Activated T-helper 2 cell treated with anti-CD3 and anti-CD28 coated beads, Interferon-gamma antibody, Interleukin-2, Interleukin-4, amounts not matched to agents 10 μg/mL and 5 μg/mL and 100 μg/mL, durations not matched to agents 14 hours and 24 hours and 36 hours (primary cell): ENCODE measurements at regions of chr9 and their contacts with region 1.

Region 1: DNA sequence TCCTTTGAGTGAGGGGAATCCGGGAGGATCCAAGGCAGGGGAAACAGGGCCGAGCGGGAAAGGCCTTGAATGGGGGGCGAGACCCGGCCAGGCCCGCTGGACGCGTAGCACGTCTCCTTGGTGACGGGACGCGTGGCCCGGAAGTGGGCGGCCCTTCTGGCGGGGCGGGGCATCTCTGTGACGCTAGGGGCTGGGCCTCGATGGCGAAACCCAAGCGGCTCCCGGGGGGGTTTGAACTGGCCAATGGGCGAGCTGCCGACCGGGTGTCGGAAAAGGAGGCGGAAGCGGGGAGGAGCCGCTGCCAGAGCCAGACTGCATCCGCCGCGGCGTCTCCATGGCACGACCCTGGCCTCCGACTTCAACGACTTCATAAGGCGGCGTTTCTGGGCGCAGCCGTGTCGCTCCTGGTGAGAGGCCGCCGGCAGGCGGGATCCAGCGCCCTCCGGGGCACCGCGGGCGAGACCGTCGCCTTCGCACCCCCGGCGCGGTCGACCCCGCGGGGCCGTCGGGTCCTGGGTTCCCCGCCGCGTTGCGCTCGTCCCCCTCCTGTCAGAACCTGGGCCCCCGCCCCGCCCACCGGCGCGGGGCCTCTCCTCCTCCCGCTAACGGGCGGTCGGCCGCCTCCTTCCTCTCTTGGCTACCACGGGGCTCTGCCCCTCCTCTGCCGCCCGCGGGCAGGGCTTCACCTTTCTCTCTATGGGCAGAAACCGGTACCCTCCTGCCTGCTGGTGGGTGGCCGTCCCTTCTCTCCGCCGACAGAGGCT is at the start of gene ODF2:
- DNase-seq: peak; percentile 98
- H3K4me3 Mint-ChIP-seq: peak within 1 kb of the TSS; percentile 93
- H3K27ac Mint-ChIP-seq: peak within 1 kb of the TSS; percentile 87
- H3K4me1 Mint-ChIP-seq: peaks cover 12% of the 10 kb centered on the region
- H3K27me3 Mint-ChIP-seq: no peaks in the 10 kb centered on the region
- total RNA-seq, gene ODF2: 61.5 and 64.4 TPM in 2 replicates

Region 2: DNA sequence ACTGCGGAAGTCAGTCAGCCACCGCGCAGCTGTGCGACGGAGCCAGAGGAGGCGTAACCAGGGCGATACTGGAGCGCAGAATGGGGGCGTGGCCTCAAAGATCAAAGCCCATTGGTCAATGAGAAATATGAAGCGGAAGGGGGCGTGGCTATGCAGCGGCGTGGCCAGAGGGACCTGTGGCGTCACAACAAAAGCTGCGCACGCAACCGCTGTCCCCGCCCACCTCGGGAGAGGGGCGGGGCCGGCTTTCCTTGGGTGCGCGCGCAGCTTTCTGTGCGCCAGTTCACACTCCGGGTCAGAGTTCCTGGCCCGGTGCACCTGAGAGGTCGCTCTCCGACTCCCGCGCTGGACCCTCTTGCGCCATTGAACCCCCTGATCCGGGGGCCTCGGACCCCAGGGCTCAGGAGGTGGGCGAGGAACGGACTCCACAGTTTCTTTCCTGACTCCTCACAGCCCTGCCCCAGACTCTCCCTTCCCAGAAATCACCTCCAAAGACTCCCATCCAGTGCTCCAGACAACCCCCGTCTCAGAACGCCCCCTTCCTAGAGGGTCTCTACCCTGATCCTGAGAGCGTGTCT is 179.9 kb before region 1 on chr9 and contains the starts of genes GOLGA2 and SWI5:
- intact Hi-C with region 1: no loop called
- DNase-seq: peak; percentile 100
- H3K4me3 Mint-ChIP-seq: peak within 1 kb of the TSS; percentile 97
- H3K27ac Mint-ChIP-seq: peak within 1 kb of the TSS; percentile 89
- H3K4me1 Mint-ChIP-seq: peaks cover 40% of the 10 kb centered on the region
- H3K27me3 Mint-ChIP-seq: no peaks in the 10 kb centered on the region
- total RNA-seq, gene GOLGA2: 44.0 and 47.9 TPM in 2 replicates
- total RNA-seq, gene SWI5: 13.5 and 13.7 TPM in 2 replicates

Region 3: DNA sequence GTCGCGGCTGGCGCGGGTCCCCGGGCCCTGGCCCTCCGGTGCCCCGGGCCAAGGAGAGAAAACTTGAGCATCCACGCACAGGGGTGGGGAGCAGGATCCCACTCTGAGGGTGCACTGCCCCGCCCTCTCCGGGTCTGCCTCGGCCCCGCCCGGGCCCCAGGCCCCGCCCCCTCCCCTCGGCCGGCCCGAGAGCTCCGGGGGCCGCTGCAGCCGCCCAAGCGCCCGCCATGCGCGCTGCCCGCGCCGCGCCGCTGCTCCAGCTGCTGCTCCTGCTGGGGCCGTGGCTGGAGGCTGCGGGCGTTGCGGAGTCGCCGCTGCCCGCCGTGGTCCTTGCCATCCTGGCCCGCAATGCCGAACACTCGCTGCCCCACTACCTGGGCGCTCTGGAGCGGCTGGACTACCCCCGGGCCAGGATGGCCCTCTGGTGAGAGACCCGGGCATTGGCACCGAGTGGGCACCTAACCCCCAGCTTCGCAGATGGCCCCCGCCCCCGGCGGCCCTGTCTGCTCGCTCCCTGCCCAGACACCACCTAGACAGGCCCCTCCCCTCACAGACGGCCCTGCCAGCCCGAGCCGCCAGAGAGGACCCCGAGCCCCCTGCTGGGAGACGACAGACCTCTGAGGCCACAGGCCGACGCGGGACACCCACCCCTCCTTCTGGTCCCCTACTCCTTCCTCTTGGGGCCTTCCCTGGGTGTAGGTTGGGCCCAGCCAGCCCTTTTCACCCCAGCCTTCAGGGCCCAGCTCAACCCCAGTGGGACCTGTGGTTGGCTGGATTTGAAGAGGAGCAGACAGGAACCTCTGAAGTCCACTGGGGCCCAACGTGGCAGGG is 35.2 kb before region 1 on chr9 and contains the start of gene CERCAM:
- intact Hi-C with region 1: loop called (anchors 1 kb)
- DNase-seq: peak; percentile 21
- H3K4me3 Mint-ChIP-seq: peak within 1 kb of the TSS; percentile 77
- H3K27ac Mint-ChIP-seq: no peak within 1 kb of the TSS
- H3K4me1 Mint-ChIP-seq: peaks cover 15% of the 10 kb centered on the region
- H3K27me3 Mint-ChIP-seq: peaks cover 29% of the 10 kb centered on the region
- total RNA-seq, gene CERCAM: 8.2 and 9.3 TPM in 2 replicates

Region 4: GRCh38 chr9:128504485-128505413 is 48.7 kb after region 1 on chr9 and contains the start of gene GLE1:
- intact Hi-C with region 1: loop called (anchors 1 kb)
- DNase-seq: peak; percentile 95
- H3K4me3 Mint-ChIP-seq: peak within 1 kb of the TSS; percentile 98
- H3K27ac Mint-ChIP-seq: peak within 1 kb of the TSS; percentile 97
- H3K4me1 Mint-ChIP-seq: peaks cover 18% of the 10 kb centered on the region
- H3K27me3 Mint-ChIP-seq: no peaks in the 10 kb centered on the region
- total RNA-seq, gene GLE1: 56.0 and 57.5 TPM in 2 replicates